ENCODE measurements at regions of chr14 and their contacts with region 1.

Region 1: GRCh38 chr14:67704484-67705089 is 2.9 kb downstream of the RDH12 start:
- DNase-seq: peak in 7 of 14 experiments; percentile 9 to 82 (median 45)
- ATAC-seq: peak; percentile 86
- H3K4me3 ChIP-seq: no peak overlapping the region
- H3K4me3 Mint-ChIP-seq: no peak overlapping the region
- H3K27ac ChIP-seq: no peak overlapping the region
- H3K27ac Mint-ChIP-seq: no peak overlapping the region
- H3K4me1 ChIP-seq: no peaks in the 10 kb centered on the region
- H3K4me1 Mint-ChIP-seq: no peaks in the 10 kb centered on the region
- H3K27me3 ChIP-seq: no peaks in the 10 kb centered on the region
- H3K27me3 Mint-ChIP-seq: peaks cover 3% of the 10 kb centered on the region
- CTCF ChIP-seq: peak; percentile 75

Region 2: DNA sequence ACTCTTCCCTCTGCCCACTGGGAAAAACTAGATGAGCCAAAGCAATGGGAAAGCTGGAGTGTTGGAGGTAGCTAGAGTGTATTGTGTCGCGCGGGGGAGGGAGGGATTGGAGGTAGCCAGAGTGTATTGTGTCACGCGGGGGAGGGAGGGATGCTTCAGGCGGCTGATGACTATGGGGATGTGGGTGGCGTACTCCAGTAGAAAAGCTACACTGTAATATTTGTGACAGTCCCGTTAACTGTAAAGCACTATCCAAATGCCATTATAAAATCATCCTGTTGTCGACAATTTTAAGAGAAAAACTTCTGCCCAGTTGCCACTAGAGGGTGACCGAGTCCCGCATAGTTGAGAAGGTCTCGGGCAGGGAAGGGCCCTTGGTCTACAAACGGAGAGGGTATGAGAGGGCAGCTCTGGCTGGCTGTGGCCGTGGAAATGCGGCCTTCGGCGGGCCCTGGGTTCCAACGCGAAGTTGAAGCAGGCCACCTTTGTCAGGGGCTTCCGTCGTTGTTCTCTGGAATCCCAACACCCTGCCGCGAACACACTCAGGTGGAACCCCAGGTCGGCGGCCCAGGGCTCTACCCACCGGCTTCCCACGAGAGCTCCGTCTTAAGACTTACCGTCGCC is 277.5 kb before region 1 on chr14:
- CTCF ChIA-PET with region 1: interaction called, 15 read pairs
- POLR2A ChIA-PET with region 1: no interaction called
- intact Hi-C with region 1: loop called (anchors 1 to 2 kb)
- DNase-seq: peak; percentile 59 to 87 (median 67)
- ATAC-seq: peak; percentile 96
- H3K4me3 ChIP-seq: no peak overlapping the region
- H3K4me3 Mint-ChIP-seq: no peak overlapping the region
- H3K27ac ChIP-seq: no peak overlapping the region
- H3K27ac Mint-ChIP-seq: no peak overlapping the region
- H3K4me1 ChIP-seq: peaks cover 5% of the 10 kb centered on the region
- H3K4me1 Mint-ChIP-seq: no peaks in the 10 kb centered on the region
- H3K27me3 ChIP-seq: peaks cover 0 to 9% of the 10 kb centered on the region in 2 experiments
- H3K27me3 Mint-ChIP-seq: peaks cover 20% of the 10 kb centered on the region
- CTCF ChIP-seq: peak; percentile 84

Region 3: GRCh38 chr14:67583711-67584644 is 120.6 kb before region 1 on chr14:
- CTCF ChIA-PET with region 1: interaction called, 21 read pairs
- POLR2A ChIA-PET with region 1: interaction called, 5 read pairs
- intact Hi-C with region 1: loop called (anchors 1 kb)
- DNase-seq: peak in 7 of 14 experiments; percentile 13 to 67 (median 42)
- ATAC-seq: peak; percentile 51
- H3K4me3 ChIP-seq: no peak overlapping the region
- H3K4me3 Mint-ChIP-seq: no peak overlapping the region
- H3K27ac ChIP-seq: no peak overlapping the region
- H3K27ac Mint-ChIP-seq: no peak overlapping the region
- H3K4me1 ChIP-seq: no peaks in the 10 kb centered on the region
- H3K4me1 Mint-ChIP-seq: no peaks in the 10 kb centered on the region
- H3K27me3 ChIP-seq: no peaks in the 10 kb centered on the region
- H3K27me3 Mint-ChIP-seq: no peaks in the 10 kb centered on the region
- CTCF ChIP-seq: peak; percentile 56

Region 4: GRCh38 chr14:67619446-67620216 is 85.0 kb before region 1 on chr14 and contains the start of gene ARG2:
- CTCF ChIA-PET with region 1: interaction called, 18 read pairs
- POLR2A ChIA-PET with region 1: interaction called, 13 read pairs
- intact Hi-C with region 1: loop called (anchors 1 kb)
- DNase-seq: peak; percentile 92 to 99 (median 97)
- ATAC-seq: peak; percentile 90
- H3K4me3 ChIP-seq: peak within 1 kb of the TSS; percentile 88
- H3K4me3 Mint-ChIP-seq: peak within 1 kb of the TSS; percentile 94
- H3K27ac ChIP-seq: peak within 1 kb of the TSS; percentile 83 to 86
- H3K27ac Mint-ChIP-seq: peak within 1 kb of the TSS; percentile 83
- H3K4me1 ChIP-seq: peaks cover 21% of the 10 kb centered on the region
- H3K4me1 Mint-ChIP-seq: peaks cover 44% of the 10 kb centered on the region
- H3K27me3 ChIP-seq: peaks cover 0 to 4% of the 10 kb centered on the region in 2 experiments
- H3K27me3 Mint-ChIP-seq: no peaks in the 10 kb centered on the region
- CTCF ChIP-seq: no peak
- total RNA-seq, gene ARG2: 3.7 to 3.9 TPM

Region 5: GRCh38 chr14:67674481-67675169 is 30.0 kb before region 1 on chr14 and contains the start of gene VTI1B:
- CTCF ChIA-PET with region 1: interaction called, 21 read pairs
- POLR2A ChIA-PET with region 1: interaction called, 4 read pairs
- intact Hi-C with region 1: loop called in 1 of 2 experiments (anchors 5 kb)
- DNase-seq: peak; percentile 57 to 89 (median 72)
- ATAC-seq: peak; percentile 91
- H3K4me3 ChIP-seq: peak within 1 kb of the TSS; percentile 83
- H3K4me3 Mint-ChIP-seq: peak within 1 kb of the TSS; percentile 91
- H3K27ac ChIP-seq: peak within 1 kb of the TSS; percentile 92 to 95
- H3K27ac Mint-ChIP-seq: peak within 1 kb of the TSS; percentile 89
- H3K4me1 ChIP-seq: peaks cover 33% of the 10 kb centered on the region
- H3K4me1 Mint-ChIP-seq: peaks cover 43% of the 10 kb centered on the region
- H3K27me3 ChIP-seq: no peaks in the 10 kb centered on the region
- H3K27me3 Mint-ChIP-seq: no peaks in the 10 kb centered on the region
- CTCF ChIP-seq: no peak
- total RNA-seq, gene VTI1B: 24.4 to 27.0 TPM

Measured in CD4-positive, alpha-beta T cell (primary cell).